ENCODE measurements at regions of chr14 and their contacts with region 1.

Region 1: GRCh38 chr14:76911473-76911872 is 85.3 kb downstream of the LRRC74A start:
- DNase-seq: no peak
- H3K4me3 ChIP-seq: no peak overlapping the region
- H3K27ac ChIP-seq: no peak overlapping the region
- H3K4me1 ChIP-seq: peaks cover 42% of the 10 kb centered on the region
- H3K27me3 ChIP-seq: no peaks in the 10 kb centered on the region
- CTCF ChIP-seq: no peak

Region 2: GRCh38 chr14:76844223-76844622 is 67.2 kb before region 1 on chr14:
- CTCF ChIA-PET with region 1: no interaction called
- POLR2A ChIA-PET with region 1: no interaction called
- intact Hi-C with region 1: no loop called
- DNase-seq: peak in 1 of 2 experiments; percentile 19
- H3K4me3 ChIP-seq: no peak overlapping the region
- H3K27ac ChIP-seq: no peak overlapping the region
- H3K4me1 ChIP-seq: no peaks in the 10 kb centered on the region
- H3K27me3 ChIP-seq: peaks cover 80% of the 10 kb centered on the region
- CTCF ChIP-seq: no peak

Region 3: DNA sequence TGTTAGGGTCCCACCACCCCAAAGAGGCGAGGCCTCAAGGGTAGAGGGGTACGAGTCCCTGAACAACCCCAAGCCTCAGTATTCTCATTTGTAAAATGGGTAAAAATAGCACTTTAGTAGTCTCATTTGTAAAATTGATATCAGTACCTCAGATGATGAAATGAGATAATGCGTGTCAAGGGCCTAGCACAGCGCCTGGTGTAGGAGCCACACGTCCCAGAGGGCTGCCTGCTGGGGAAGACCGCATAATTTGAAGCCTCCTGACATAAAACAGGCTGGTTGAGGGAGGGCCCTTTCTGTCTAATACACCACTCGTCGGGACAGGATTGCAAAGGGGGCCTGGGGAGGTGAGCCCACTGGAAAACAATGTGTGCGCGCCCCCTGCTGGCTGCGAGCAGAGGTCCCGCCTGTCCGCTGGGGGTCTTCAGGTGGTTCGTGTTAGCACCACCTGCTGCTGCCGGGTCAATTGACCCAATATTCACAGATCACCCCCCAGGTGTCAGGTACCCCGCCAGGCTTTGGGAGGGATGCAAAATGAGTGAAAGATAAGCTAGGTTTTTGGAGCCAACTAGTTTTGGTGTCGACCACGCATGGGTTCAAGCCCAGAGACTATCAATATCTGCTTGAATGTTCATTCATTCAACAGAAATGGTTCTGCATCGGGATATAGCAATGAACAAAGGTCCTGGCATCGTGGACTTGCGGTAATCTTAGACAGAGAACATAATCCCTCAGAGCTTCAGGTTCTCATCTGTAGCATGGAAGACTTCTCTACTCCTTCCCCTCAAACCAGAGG is 141.8 kb after region 1 on chr14:
- CTCF ChIA-PET with region 1: interaction called, 16 read pairs
- POLR2A ChIA-PET with region 1: no interaction called
- intact Hi-C with region 1: no loop called
- DNase-seq: no peak
- H3K4me3 ChIP-seq: no peak overlapping the region
- H3K27ac ChIP-seq: no peak overlapping the region
- H3K4me1 ChIP-seq: peaks cover 8% of the 10 kb centered on the region; the same call in 1 of the 2 replicates
- H3K27me3 ChIP-seq: no peaks in the 10 kb centered on the region
- CTCF ChIP-seq: no peak

Region 4: DNA sequence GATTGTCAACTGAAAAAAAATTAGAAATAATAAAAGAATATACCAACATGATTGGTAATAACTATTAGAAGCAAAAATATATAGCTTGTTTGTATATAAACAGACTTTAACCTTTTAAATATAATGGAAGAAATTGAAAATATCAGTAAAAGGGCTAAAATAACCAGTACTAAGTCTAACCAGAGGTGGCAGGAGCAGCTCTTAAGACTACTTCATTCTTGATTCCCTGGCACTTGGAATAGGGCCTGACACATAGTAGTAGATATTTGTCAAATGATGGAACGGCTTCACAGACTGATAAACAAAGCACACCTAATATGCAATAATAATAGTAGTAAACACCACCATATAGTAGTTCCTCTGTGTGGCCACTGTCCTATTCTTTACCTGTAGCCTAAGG is 279.5 kb after region 1 on chr14:
- CTCF ChIA-PET with region 1: no interaction called
- POLR2A ChIA-PET with region 1: interaction called, 10 read pairs
- intact Hi-C with region 1: no loop called
- DNase-seq: no peak
- H3K4me3 ChIP-seq: no peak overlapping the region
- H3K27ac ChIP-seq: no peak overlapping the region
- H3K4me1 ChIP-seq: no peaks in the 10 kb centered on the region
- H3K27me3 ChIP-seq: peaks cover 83% of the 10 kb centered on the region
- CTCF ChIP-seq: no peak

Measured in PC-9 (cell line).